PC-3 (cell line): ENCODE measurements at regions of chr10 and their contacts with region 1.

Region 1: DNA sequence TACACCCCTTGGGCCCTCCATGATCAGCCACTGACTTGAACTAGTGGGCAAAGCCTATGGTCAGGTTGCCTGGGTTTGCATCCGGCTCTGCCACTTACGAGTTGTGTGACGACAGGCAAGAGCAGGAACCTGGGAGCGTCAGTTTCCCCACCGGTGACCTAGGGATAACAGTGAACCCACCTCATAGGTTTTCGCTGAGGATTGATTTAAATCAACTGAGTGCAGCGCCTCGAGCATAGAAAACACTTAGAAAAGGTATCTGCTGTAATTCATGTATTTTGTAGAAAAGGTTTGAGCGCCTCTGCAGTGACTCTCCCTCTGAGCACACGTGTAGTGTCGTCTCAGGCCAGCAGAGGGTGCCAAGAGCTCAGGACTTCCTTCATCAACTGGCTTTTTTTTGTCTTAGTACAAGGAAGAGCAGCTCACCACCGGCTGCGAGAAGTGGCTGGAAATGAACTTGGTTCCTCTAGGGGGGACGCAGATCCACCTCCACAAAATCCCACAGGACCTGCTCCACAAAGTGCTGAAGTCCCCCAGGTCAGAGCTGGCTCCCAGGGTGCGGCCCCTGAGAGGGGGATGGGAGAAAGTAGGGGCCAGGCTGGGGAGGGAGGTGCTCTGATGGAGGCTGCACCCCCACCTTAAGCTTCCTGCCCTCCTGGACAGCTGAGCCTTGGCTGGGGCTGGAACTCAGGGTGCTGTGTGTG is 27.7 kb downstream of the BTBD16 start:
- DNase-seq: peak; percentile 82
- ATAC-seq: peak; percentile 83
- H3K4me3 ChIP-seq: no peak overlapping the region
- H3K27ac ChIP-seq: no peak overlapping the region
- H3K4me1 ChIP-seq: peaks cover 22% of the 10 kb centered on the region
- H3K27me3 ChIP-seq: no peaks in the 10 kb centered on the region
- CTCF ChIP-seq: peak; percentile 87

Region 2: GRCh38 chr10:122342293-122343134 is 43.8 kb after region 1 on chr10:
- CTCF ChIA-PET with region 1: interaction called, 3 read pairs
- POLR2A ChIA-PET with region 1: no interaction called
- intact Hi-C with region 1: loop called (anchors 2 kb)
- DNase-seq: peak; percentile 73
- ATAC-seq: peak; percentile 71
- H3K4me3 ChIP-seq: no peak overlapping the region
- H3K27ac ChIP-seq: no peak overlapping the region
- H3K4me1 ChIP-seq: no peaks in the 10 kb centered on the region; the same call in 1 of the 2 replicates
- H3K27me3 ChIP-seq: no peaks in the 10 kb centered on the region
- CTCF ChIP-seq: peak; percentile 81

Region 3: GRCh38 chr10:122368502-122369256 is 69.9 kb after region 1 on chr10:
- CTCF ChIA-PET with region 1: no interaction called
- POLR2A ChIA-PET with region 1: no interaction called
- intact Hi-C with region 1: no loop called
- DNase-seq: no peak
- ATAC-seq: no peak
- H3K4me3 ChIP-seq: no peak overlapping the region
- H3K27ac ChIP-seq: no peak overlapping the region
- H3K4me1 ChIP-seq: peaks cover 7% of the 10 kb centered on the region; the same call in 1 of the 2 replicates
- H3K27me3 ChIP-seq: 0 out of 2 replicates have a peak, but pooled peaks cover 3% of the 10 kb centered on the region
- CTCF ChIP-seq: no peak

Region 4: GRCh38 chr10:122435212-122435827 is 136.6 kb after region 1 on chr10:
- CTCF ChIA-PET with region 1: interaction called, 11 read pairs
- POLR2A ChIA-PET with region 1: no interaction called
- intact Hi-C with region 1: loop called (anchors 1 kb)
- DNase-seq: peak; percentile 75
- ATAC-seq: peak; percentile 22; the same call in 1 of the 2 replicates
- H3K4me3 ChIP-seq: no peak overlapping the region
- H3K27ac ChIP-seq: no peak overlapping the region
- H3K4me1 ChIP-seq: no peaks in the 10 kb centered on the region
- H3K27me3 ChIP-seq: no peaks in the 10 kb centered on the region
- CTCF ChIP-seq: peak; percentile 72

Region 5: GRCh38 chr10:122703439-122704118 is 404.8 kb after region 1 on chr10:
- CTCF ChIA-PET with region 1: no interaction called
- POLR2A ChIA-PET with region 1: no interaction called
- intact Hi-C with region 1: loop called (anchors 10 kb)
- DNase-seq: peak; percentile 68
- ATAC-seq: peak; percentile 94
- H3K4me3 ChIP-seq: no peak overlapping the region
- H3K27ac ChIP-seq: no peak overlapping the region
- H3K4me1 ChIP-seq: no peaks in the 10 kb centered on the region
- H3K27me3 ChIP-seq: no peaks in the 10 kb centered on the region
- CTCF ChIP-seq: peak; percentile 87